ENCODE measurements at regions of chr11 and their contacts with region 1.

Region 1: DNA sequence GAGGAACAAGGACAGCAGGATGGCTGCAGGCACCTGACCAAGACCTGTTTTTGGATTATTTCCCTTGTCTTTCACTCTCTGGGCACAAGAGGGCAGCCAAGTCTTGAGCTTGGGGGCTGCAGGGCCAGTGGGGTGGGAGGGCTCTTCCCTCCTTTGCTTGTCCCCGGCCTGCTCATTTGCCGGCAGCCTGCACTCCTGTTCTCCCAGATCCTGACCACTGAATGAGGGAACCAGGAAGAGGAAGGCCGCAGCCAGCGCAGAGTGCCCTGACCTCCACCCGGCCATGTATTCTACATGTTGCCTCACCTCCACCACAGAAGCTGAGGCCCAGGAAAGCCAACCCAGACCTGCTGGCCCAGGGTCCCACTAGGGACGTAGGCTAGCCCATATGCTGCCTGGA is 15.5 kb upstream of the NNMT start:
- DNase-seq: peak; percentile 90
- H3K4me3 ChIP-seq: no peak overlapping the region
- H3K27ac ChIP-seq: peak overlapping the region; percentile 40
- H3K4me1 ChIP-seq: peaks cover 25% of the 10 kb centered on the region
- H3K27me3 ChIP-seq: peaks cover 0 to 8% of the 10 kb centered on the region in 2 experiments
- CTCF ChIP-seq: peak; percentile 71 to 80
- POLR2A ChIP-seq: no peak

Region 2: DNA sequence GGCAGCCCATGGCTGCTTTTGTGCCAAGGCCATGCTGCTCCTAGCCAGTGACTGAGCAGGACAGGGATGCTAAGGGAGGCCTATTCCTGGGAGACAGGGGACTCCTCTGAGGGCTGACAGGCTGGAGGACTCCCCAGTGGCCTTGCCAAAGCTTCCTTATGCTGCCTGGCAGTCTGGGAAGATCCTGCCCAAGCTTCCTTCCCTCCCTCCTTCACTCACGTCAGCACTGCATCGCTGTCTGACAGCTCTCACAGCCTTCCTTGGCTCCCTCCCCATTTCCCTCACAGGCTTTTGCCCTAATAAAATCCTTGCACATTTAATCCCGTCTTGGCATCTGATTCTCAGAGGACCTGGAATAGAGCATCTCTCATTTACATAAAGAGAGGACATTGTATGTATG is 279.3 kb before region 1 on chr11:
- CTCF ChIA-PET with region 1: no interaction called
- POLR2A ChIA-PET with region 1: no interaction called
- dilution Hi-C with region 1: no loop called
- intact Hi-C with region 1: no loop called
- DNase-seq: no peak
- H3K4me3 ChIP-seq: no peak overlapping the region
- H3K27ac ChIP-seq: no peak overlapping the region
- H3K4me1 ChIP-seq: no peaks in the 10 kb centered on the region
- H3K27me3 ChIP-seq: peaks cover 0 to 8% of the 10 kb centered on the region in 2 experiments
- CTCF ChIP-seq: no peak
- POLR2A ChIP-seq: no peak

Region 3: GRCh38 chr11:114307524-114308203 is 27.0 kb after region 1 on chr11:
- CTCF ChIA-PET with region 1: interaction called, 11 read pairs
- POLR2A ChIA-PET with region 1: interaction called, 3 read pairs
- dilution Hi-C with region 1: no loop called
- intact Hi-C with region 1: loop called (anchors 1 kb)
- DNase-seq: peak; percentile 91
- H3K4me3 ChIP-seq: peak overlapping the region in 2 of 3 experiments; percentile 10 to 39
- H3K27ac ChIP-seq: peak overlapping the region; percentile 79
- H3K4me1 ChIP-seq: peaks cover 29% of the 10 kb centered on the region
- H3K27me3 ChIP-seq: no peaks in the 10 kb centered on the region
- CTCF ChIP-seq: no peak
- POLR2A ChIP-seq: peak; percentile 15

Region 4: DNA sequence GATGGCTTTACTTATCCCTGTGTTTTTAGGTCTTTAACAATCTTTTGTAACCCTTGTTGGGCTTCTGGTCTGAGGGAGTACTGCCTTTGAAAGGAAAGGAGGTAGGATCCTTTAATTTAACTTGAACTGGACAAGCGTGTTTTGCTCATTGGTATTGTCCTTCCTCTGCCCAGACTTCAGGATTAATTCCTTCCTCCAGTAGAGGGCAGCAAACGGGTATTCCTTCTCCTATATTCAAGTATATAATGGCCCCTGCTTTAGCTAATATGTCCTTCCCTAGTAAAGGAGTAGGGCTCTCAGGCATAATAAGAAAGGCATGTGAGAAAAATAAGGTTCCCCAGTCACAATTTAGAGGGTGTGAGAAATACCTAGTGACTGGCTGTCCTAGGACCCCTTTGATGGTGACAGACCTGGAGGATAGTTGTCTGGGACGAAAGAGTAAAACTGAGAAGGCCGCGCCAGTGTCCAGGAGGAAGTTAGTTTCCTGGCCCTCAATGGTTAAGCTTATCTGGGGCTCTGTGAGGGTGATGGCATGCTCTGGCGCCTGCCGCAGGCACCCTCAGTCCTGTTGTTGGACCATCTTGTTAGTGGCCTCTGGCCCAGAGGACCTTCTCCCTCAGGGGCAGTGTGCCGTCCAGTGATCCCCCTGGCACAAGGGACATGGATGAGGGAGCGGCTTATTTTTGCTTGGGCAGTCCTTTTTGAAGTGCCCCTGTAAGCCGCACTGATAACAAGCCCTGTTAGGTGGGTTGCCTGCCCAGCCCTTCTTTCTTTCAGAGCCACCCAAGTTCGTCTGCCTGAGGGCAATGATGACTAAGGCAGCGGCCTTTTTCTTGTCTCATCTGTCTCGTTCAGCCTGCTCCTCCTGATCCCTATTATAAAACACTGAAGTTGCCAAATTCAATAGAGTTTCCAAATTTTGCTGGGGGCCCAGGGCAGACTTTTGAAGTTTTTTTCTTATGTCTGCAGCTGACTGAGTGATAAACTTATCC is 67.8 kb after region 1 on chr11:
- CTCF ChIA-PET with region 1: interaction called, 13 read pairs
- POLR2A ChIA-PET with region 1: no interaction called
- dilution Hi-C with region 1: no loop called
- intact Hi-C with region 1: loop called (anchors 2 kb)
- DNase-seq: peak; percentile 75
- H3K4me3 ChIP-seq: no peak overlapping the region
- H3K27ac ChIP-seq: no peak overlapping the region
- H3K4me1 ChIP-seq: no peaks in the 10 kb centered on the region
- H3K27me3 ChIP-seq: no peaks in the 10 kb centered on the region
- CTCF ChIP-seq: peak; percentile 35 to 39
- POLR2A ChIP-seq: no peak

Region 5: GRCh38 chr11:114563077-114563476 is 282.4 kb after region 1 on chr11:
- CTCF ChIA-PET with region 1: no interaction called
- POLR2A ChIA-PET with region 1: no interaction called
- dilution Hi-C with region 1: no loop called
- intact Hi-C with region 1: loop called (anchors 10 kb)
- DNase-seq: peak; percentile 51
- H3K4me3 ChIP-seq: peak overlapping the region in 1 of 3 experiments; percentile 23
- H3K27ac ChIP-seq: peak overlapping the region; percentile 35
- H3K4me1 ChIP-seq: peaks cover 20% of the 10 kb centered on the region
- H3K27me3 ChIP-seq: no peaks in the 10 kb centered on the region
- CTCF ChIP-seq: no peak
- POLR2A ChIP-seq: no peak

Region 6: GRCh38 chr11:114738954-114739353 is 458.3 kb after region 1 on chr11:
- CTCF ChIA-PET with region 1: interaction called, 14 read pairs
- POLR2A ChIA-PET with region 1: no interaction called
- dilution Hi-C with region 1: no loop called
- intact Hi-C with region 1: loop called (anchors 1 kb)
- DNase-seq: peak; percentile 50
- H3K4me3 ChIP-seq: no peak overlapping the region
- H3K27ac ChIP-seq: no peak overlapping the region
- H3K4me1 ChIP-seq: no peaks in the 10 kb centered on the region
- H3K27me3 ChIP-seq: peaks cover 0 to 2% of the 10 kb centered on the region in 2 experiments
- CTCF ChIP-seq: peak; percentile 57 to 78
- POLR2A ChIP-seq: no peak

Region 7: GRCh38 chr11:115504276-115505158 is 1223.8 kb after region 1 on chr11 and contains the start of gene CADM1:
- CTCF ChIA-PET with region 1: no interaction called
- POLR2A ChIA-PET with region 1: no interaction called
- dilution Hi-C with region 1: no loop called
- intact Hi-C with region 1: loop called (anchors 10 kb)
- DNase-seq: peak; percentile 84
- H3K4me3 ChIP-seq: peak within 1 kb of the TSS; percentile 4 to 42 (median 41)
- H3K27ac ChIP-seq: no peak within 1 kb of the TSS
- H3K4me1 ChIP-seq: peaks cover 9% of the 10 kb centered on the region
- H3K27me3 ChIP-seq: peaks cover 16 to 39% of the 10 kb centered on the region in 2 experiments
- CTCF ChIP-seq: peak; percentile 58 to 63
- POLR2A ChIP-seq: no peak
- total RNA-seq, gene CADM1: 2.6 and 2.9 TPM in 2 replicates